ENCODE measurements at regions of chr19 and their contacts with region 1.

Region 1: DNA sequence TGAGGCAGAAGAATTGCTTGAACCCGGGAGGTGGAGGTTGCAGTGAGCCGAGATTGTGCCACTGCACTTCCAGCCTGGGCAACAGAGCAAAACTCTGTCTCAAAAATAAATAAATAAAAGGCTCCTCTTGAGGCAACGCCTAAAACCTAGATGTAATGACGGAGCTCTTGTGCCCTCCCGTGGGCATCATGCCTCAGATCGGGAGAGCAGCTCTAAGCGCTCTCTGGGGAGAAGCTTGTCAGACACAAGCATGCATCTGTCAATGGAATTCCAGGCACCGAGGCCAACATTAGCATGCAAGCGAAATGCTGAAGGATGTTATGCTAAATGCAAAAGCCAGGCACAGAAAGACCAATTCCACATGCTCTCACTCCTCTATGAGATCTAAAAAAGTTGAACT is 45.6 kb upstream of the MRI1 start:
- DNase-seq: no peak

Region 2: DNA sequence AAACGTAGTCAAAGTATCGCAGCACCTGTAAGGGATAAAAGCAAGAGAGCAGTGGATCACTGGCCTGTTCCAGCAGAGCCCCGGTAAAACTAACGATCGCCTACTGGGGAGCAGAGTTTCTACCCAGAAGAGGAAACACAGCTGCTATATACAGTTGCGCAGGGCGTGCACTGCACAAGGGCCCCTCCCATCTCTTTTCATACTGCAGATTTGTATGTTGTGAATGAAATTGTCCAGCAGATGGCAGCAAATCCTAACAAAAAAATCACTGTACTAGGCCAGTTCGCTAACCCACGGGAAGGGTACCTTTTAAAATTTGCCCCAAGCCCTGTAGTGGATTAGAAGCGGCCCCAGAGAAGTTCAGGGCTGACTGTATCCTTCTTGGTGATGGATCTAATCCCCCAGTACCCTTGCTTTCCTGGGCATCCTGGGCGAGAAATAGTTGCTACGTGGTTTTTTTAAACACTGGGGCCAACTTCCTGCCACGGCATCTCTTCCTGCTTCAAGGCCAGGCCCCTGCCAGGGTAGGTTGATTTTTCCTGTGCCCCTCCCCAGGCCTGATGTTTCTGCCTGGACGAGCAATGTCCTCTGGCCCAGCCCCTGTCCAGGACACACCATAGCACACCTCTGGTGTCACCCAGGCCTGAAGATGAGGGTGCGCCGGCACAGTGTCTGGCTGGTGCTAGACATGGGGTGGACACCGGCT is 441.5 kb before region 1 on chr19:
- intact Hi-C with region 1: loop called in 1 of 2 experiments (anchors 10 kb)
- DNase-seq: no peak

Region 3: DNA sequence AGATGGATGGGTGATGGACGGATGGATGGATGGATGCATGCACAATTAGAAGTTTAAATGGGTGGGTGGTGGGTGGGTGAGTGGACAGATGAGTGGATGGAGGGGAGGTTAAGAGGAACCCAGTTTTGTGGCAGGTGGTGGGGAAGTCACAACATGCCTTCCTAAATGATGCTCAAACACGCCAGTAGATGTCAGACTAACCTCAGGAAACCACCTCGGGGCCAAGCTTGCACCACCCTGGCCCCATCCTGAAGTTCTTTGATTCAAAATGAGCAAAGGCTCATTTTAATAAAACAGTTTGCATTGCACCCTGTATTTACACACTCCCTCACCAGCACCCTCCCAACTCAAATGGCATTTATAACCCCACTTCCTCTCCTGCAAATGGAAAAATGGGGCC is 121.1 kb before region 1 on chr19:
- intact Hi-C with region 1: loop called (anchors 2 kb)
- DNase-seq: no peak

Region 4: DNA sequence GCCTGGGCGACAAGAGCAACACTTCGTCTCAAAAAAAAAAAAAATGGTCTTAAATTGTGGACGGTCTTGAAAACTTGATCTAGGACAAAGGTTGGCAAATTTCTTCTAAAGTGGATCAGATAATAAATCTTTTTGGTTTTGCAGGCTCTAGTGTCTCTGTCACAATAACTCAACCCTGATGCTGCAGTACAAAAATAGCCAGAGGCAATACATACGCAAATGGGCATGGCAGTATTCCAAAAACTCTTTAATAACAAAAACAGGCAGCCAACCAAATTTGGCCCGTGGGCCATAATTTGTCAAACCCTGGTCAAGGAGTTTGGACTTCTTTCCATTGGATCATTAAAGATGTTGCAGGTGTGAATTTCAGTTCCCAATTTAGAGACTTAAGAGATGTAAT is 47.9 kb before region 1 on chr19:
- intact Hi-C with region 1: loop called in 1 of 2 experiments (anchors 2 kb)
- DNase-seq: no peak

Region 5: DNA sequence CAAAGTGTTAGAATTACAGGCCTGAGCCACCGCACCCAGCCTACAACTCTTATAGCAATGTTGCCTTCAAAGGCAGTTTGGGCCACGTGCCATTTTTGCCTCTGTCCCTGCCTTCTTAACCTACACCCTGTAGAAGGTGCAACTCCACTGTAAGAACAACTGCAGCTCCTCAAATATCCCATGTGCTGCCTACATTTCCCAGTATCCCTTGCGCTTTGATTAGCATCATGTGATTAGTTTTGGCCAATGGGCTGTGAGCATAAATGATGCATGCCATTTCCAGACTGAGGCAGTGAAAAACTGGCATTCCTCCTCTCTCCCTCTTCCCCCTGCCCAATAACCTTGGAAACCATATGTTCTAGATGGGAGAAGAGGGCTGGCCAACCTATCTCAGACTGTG is 29.6 kb before region 1 on chr19:
- intact Hi-C with region 1: loop called in 1 of 2 experiments (anchors 1 kb)
- DNase-seq: no peak

Region 6: GRCh38 chr19:14310055-14310454 is 591.3 kb after region 1 on chr19:
- intact Hi-C with region 1: no loop called
- DNase-seq: no peak